Mucosa of descending colon (tissue), 3 donors: ENCODE measurements at regions of chr2 and their contacts with region 1.

Region 1: DNA sequence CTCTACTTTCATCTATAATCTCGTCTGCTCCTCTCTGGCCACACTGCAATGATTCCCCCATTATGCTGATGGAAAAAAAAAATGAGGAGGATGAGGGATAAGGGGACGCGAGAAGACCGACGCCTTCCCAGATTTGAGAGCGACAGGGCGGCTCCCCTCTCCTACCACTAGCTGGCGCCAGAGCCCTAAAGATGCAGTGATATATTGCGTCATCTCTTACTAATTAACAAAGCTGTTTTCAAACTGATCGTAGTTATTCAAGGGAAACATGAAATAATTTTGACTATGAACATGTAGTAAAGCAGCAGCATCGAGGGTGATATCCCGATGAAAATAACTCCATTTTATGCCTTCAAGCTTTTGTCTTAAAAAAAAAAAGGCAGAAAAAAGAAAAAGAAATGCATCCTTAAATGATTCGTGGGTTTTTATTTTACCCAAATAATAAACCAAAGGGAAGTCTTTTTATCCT is 48.0 kb upstream of the HNRNPA3 start:
- DNase-seq: peak; percentile 77 to 92 (median 87)
- ATAC-seq: peak; percentile 84
- H3K4me3 ChIP-seq: no peak overlapping the region
- H3K4me1 ChIP-seq: peaks cover 24% of the 10 kb centered on the region
- CTCF ChIP-seq: peak; percentile 96

Region 2: GRCh38 chr2:177118636-177119035 is 46.0 kb before region 1 on chr2:
- intact Hi-C with region 1: no loop called
- DNase-seq: no peak
- ATAC-seq: no peak
- H3K4me3 ChIP-seq: no peak overlapping the region
- H3K4me1 ChIP-seq: no peaks in the 10 kb centered on the region
- CTCF ChIP-seq: no peak

Region 3: DNA sequence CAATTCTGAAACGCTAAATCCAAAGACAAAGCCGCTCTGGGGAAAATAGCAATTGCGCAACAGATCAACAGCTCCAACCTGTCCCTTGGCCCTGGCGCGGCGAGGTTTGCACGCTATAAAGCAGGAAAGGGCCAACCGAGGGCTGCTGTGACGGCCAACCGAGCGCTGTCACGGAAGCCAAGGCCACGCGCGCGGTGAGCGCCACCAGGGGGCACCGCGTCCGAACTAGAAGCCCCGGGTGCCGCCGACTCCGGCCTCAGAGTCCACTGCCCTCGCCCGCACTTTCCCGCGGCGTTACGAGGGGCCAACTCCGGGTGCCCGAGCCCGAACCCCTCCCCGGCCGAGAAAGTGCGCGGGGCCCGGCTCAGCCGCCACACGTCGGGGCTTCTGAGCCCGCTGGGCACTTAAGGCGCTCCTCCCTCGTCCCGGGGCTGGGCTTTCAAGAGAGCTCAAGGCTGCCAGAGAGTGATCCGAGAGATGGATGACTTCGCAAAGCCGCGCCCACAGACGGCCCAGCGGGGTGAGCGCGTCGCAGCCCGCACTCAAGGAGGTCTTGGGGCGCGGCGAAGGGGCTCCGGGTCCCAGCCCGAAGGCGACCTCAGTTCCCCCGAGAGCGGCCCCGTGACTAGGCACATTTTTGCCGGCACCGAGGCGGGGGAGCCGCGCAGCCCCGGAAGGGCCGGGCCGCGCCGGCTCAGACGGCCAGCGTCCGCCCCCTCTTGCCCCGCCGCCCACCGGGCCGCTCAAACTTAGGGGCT is 99.0 kb after region 1 on chr2:
- intact Hi-C with region 1: loop called in 1 of 2 experiments (anchors 5 kb)
- DNase-seq: peak; percentile 98 to 100 (median 100)
- ATAC-seq: peak; percentile 83
- H3K4me3 ChIP-seq: peak overlapping the region; percentile 100
- H3K4me1 ChIP-seq: peaks cover 34% of the 10 kb centered on the region
- CTCF ChIP-seq: peak; percentile 80

Region 4: GRCh38 chr2:177419274-177419673 is 254.7 kb after region 1 on chr2:
- intact Hi-C with region 1: loop called in 1 of 2 experiments (anchors 10 kb)
- DNase-seq: no peak
- ATAC-seq: peak; percentile 29
- H3K4me3 ChIP-seq: no peak overlapping the region
- H3K4me1 ChIP-seq: no peaks in the 10 kb centered on the region
- CTCF ChIP-seq: no peak